Adrenal gland (tissue), 19 donors: ENCODE measurements at regions of chr6 and their contacts with region 1.

Region 1: DNA sequence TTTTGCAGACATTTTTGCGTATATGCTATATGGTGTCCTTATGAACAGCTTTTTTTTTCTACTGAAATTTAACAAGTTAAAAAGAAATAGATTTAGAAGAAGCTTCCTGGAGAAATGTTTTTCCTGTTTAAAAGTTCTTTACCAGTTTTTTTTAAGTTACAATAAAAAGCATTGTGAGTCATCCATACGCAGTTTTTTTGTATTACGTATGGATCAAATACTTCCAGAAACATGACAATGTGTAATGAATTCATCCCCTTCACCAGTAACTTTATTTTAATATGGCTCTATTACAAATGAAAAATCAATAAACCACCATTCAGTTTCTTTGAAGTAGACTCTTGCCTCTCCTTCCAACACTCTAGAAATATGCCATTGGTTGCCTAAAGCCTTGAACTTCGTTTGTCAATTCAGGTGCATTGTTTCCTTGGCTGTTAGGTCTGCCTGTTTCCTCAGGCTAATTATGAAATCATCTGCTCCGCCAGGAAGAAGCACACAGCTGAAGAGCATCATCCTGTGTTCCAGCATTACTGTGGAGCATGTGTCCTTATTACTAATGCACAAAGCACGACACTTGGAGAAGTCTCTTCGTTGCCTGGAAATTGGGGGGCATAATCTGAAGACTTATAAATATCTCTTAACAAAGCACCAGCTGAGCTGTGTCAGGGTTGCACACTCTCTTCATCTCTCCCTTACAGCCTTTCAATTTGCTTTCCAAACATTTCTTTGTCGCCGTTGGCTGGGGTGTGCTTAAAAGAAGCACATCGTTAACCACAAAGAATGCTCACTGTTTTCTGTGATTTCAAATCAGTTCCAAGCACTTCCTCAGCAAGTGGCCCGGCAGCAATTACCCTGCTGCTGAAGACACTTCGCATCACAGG is 9.6 kb downstream of the MOXD1 start:
- DNase-seq: peak in 5 of 7 donors; percentile 15 to 68 (median 35)
- H3K4me3 ChIP-seq: no peak overlapping the region
- H3K27ac ChIP-seq: peak overlapping the region in 2 of 5 donors; percentile 61 to 80
- H3K4me1 ChIP-seq: peaks cover 0 to 5% of the 10 kb centered on the region in 2 donors
- H3K27me3 ChIP-seq: no peaks in the 10 kb centered on the region
- CTCF ChIP-seq: no peak
- POLR2A ChIP-seq: no peak

Region 2: GRCh38 chr6:132300323-132300949 is 91.2 kb before region 1 on chr6:
- intact Hi-C with region 1: loop called (anchors 10 kb)
- DNase-seq: peak; percentile 35 to 78 (median 54)
- H3K4me3 ChIP-seq: no peak overlapping the region
- H3K27ac ChIP-seq: no peak overlapping the region
- H3K4me1 ChIP-seq: no peaks in the 10 kb centered on the region
- H3K27me3 ChIP-seq: no peaks in the 10 kb centered on the region
- CTCF ChIP-seq: peak; percentile 55 to 82 (median 77)
- POLR2A ChIP-seq: no peak